GM10248 (cell line): ENCODE measurements at regions of chr11 and their contacts with region 1.

Region 1: DNA sequence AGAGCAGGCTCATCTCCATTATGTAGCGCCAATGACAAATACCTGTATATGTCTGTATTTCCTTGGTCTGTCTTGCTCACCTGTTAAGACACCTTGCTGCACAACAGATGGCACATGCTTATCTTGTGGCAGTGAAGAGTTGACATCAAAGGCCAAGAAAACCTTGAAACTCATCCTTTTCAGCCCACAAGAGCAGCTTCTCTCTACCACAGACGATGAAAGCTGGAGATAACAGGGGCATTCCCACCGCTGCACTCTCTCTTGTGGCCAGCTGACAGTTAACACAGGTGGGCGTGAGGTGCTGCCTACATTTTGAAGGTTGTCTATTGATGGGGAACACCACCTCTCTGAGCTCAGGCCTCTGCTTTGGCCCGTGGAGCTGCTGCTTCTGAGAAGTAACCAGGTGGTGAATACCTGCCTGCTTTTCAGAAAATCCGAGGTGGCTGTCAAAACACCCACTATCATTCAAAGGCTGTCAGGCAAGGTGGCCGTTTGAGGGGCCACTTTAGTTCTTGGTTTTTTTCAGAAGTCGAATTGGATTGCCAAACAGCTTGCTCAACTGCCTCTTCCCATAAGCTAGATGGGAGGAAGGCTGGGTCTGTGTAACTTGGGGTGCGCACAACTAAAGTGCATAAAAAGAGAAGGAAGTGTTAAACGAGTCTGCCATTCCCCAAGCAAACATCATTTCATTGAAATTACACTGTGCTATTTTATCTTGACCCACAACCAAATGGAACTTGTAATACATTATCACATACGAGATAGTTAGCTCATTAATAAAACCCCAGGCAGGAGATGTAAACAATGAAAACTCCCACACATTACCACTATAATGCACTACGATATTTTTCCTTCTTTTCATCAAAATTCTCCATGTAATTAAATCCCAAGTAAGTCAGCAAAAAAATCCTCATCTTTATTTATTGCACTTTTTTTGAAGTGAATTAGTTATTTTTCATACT is 87.1 kb upstream of the RAG2 start:
- DNase-seq: peak; percentile 13
- CTCF ChIP-seq: no peak

Region 2: GRCh38 chr11:36672813-36673450 is 12.2 kb before region 1 on chr11:
- CTCF ChIA-PET with region 1: interaction called, 10 read pairs
- POLR2A ChIA-PET with region 1: no interaction called
- DNase-seq: no peak
- CTCF ChIP-seq: peak; percentile 76

Region 3: DNA sequence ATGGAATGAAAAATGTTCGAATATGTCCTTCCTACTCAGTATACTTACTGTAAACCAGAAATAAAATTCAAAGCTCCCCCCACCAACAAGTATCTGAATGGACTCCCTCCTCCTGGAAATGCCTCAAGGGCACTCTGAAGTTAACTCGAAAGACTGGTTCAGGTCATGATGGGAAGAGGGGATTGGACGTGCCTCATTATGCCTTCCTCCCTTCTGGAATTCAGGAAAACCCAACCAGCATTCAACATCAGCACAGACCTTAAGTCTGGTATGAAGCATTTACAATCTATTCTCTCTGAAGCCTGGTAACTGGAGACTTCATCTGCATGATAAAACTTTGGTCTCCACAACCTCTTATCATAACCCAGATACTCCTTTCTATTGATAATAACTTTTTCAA is 341.2 kb after region 1 on chr11:
- CTCF ChIA-PET with region 1: no interaction called
- POLR2A ChIA-PET with region 1: no interaction called
- DNase-seq: no peak
- CTCF ChIP-seq: no peak